GM12878 (cell line): ENCODE measurements at regions of chr6 and their contacts with region 1.

Region 1: DNA sequence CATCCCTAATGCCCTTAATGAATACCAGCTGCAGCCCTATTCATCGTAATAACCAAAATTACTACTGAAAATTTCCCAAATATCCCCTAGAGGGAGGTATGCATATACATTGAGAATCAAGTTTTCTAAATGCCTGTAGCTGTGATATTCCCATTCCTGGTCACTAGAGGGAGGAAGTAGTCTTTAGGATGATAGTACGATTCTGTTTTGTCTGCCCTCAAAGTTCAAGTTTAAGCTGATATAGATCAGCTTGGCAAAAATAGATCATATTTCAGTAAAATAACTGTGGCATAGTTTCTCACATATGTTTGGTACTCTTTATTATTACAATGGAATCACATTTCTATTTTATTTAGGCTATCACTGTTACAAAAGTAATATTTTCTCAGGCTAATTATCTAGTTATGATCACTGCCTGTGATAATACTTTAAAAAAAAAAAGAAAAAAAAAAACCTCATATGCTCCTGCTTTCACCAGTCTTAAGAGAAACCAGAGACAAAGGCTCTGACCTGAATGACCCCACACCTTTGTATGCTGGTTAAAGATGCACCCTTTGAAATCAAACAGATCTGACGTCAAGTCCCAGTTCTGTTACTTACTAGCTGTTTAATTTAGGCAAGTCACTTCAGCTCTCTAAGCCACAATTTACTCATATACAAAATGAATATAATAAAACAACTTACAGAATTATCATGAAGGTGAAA is 11.0 kb downstream of the TSPYL1 start:
- DNase-seq: no peak
- ATAC-seq: peak; percentile 86
- H3K4me3 ChIP-seq: no peak overlapping the region
- H3K27ac ChIP-seq: no peak overlapping the region
- H3K4me1 ChIP-seq: no peaks in the 10 kb centered on the region
- H3K27me3 ChIP-seq: no peaks in the 10 kb centered on the region
- CTCF ChIP-seq: peak; percentile 70 to 97 (median 74); a peak in 5 of 6 replicates
- EP300 ChIP-seq: no peak
- POLR2A ChIP-seq: no peak
- RAD21 ChIP-seq: peak; percentile 83

Region 2: GRCh38 chr6:116253505-116254296 is 15.0 kb before region 1 on chr6 and contains the start of gene TSPYL4:
- CTCF ChIA-PET with region 1: interaction called, 37 read pairs
- POLR2A ChIA-PET with region 1: interaction called, 12 read pairs
- RAD21 ChIA-PET with region 1: interaction called, 11 read pairs
- SMC1A ChIA-PET with region 1: interaction called, 16 read pairs
- in situ Hi-C with region 1: no loop called
- intact Hi-C with region 1: no loop called
- DNase-seq: peak; percentile 87
- ATAC-seq: peak; percentile 96
- H3K4me3 ChIP-seq: peak within 1 kb of the TSS; percentile 94
- H3K27ac ChIP-seq: peak within 1 kb of the TSS; percentile 90
- H3K4me1 ChIP-seq: peaks cover 13% of the 10 kb centered on the region
- H3K27me3 ChIP-seq: no peaks in the 10 kb centered on the region
- CTCF ChIP-seq: no peak
- EP300 ChIP-seq: no peak
- POLR2A ChIP-seq: peak; percentile 84
- RAD21 ChIP-seq: no peak
- polyA plus RNA-seq, gene TSPYL4: 1.5 to 2.2 TPM

Region 3: DNA sequence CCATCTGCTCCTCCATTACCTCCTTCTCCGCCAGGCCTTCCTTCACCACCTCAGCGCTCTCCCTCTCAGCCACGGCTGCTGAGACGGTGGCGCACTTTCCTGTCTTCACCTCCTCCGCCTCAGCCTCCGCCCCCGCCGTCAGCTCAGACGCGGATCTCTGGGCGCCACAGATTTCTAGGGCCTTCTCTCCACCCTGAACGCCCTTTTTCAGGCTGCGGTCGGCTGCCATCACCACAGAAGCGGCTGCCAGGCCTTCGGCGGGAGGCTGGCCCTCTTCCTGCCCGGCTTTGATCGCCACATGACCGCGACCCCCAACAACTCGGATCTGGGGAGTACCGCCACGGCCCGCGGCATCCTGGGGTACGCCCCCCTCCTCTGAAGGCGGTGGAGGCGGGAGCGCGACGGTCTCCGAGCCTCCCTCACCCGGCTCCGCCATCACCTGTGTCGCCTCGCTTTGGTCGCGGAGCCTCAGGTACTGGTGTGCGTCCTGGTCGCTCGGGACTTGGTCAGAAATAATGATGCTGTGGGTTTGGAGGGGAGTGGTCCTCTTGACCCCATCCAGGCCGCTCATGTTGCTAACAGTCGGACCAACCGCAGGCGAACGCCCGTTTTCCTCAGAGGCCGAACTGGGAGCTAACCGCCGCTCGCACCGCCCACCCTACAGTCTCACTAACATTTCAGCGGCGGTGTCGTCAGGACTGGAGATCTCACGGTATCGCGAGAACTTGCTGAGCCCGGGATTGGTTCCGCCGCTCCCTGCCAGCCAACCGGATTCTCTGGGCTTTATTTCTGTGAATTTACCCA is 10.7 kb after region 1 on chr6 and contains the start of gene TSPYL1:
- CTCF ChIA-PET with region 1: interaction called, 76 read pairs
- POLR2A ChIA-PET with region 1: interaction called, 8 read pairs
- RAD21 ChIA-PET with region 1: interaction called, 17 read pairs
- SMC1A ChIA-PET with region 1: interaction called, 23 read pairs
- in situ Hi-C with region 1: no loop called
- intact Hi-C with region 1: no loop called
- DNase-seq: peak; percentile 90
- ATAC-seq: peak; percentile 94
- H3K4me3 ChIP-seq: peak within 1 kb of the TSS; percentile 86
- H3K27ac ChIP-seq: peak within 1 kb of the TSS; percentile 96
- H3K4me1 ChIP-seq: no peaks in the 10 kb centered on the region
- H3K27me3 ChIP-seq: no peaks in the 10 kb centered on the region
- CTCF ChIP-seq: peak in 2 of 3 experiments; percentile 16 to 18; a peak in 1 of 6 replicates
- EP300 ChIP-seq: 0 out of 4 replicates have a peak, but pooled peaks of 1 of the 2 experiments have one; percentile 33
- POLR2A ChIP-seq: peak; percentile 94
- RAD21 ChIP-seq: no peak
- polyA plus RNA-seq, gene TSPYL1: 22.9 to 29.9 TPM

Region 4: DNA sequence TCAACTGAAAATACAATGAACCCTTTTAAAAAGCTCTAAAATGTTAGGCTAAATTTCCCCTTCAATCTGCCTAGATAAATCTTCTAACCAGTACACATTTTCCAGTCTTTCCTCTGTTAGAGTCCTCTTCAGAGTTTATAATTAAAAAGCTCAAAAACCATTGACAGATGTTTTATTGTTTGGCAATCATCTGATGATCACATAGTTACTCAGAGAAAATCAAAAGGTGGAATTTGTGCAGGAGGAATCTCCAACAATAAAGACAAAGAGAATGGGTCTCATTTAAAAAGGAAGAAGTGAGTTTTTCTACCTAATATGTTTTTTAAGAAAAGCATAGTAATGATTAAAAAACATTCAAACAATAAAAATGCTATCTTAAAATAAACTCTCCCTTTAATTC is 273.7 kb after region 1 on chr6:
- CTCF ChIA-PET with region 1: interaction called, 11 read pairs
- POLR2A ChIA-PET with region 1: interaction called, 4 read pairs
- RAD21 ChIA-PET with region 1: interaction called, 4 read pairs
- SMC1A ChIA-PET with region 1: interaction called, 3 read pairs
- in situ Hi-C with region 1: no loop called
- intact Hi-C with region 1: no loop called
- DNase-seq: no peak
- ATAC-seq: no peak
- H3K4me3 ChIP-seq: no peak overlapping the region
- H3K27ac ChIP-seq: no peak overlapping the region
- H3K4me1 ChIP-seq: no peaks in the 10 kb centered on the region
- H3K27me3 ChIP-seq: peaks cover 0 to 8% of the 10 kb centered on the region in 2 experiments; a peak in 1 of 4 replicates
- CTCF ChIP-seq: no peak
- EP300 ChIP-seq: no peak
- POLR2A ChIP-seq: no peak
- RAD21 ChIP-seq: no peak

Region 5: GRCh38 chr6:116561377-116562018 is 292.8 kb after region 1 on chr6:
- CTCF ChIA-PET with region 1: interaction called, 30 read pairs
- POLR2A ChIA-PET with region 1: interaction called, 9 read pairs
- RAD21 ChIA-PET with region 1: interaction called, 28 read pairs
- SMC1A ChIA-PET with region 1: interaction called, 19 read pairs
- in situ Hi-C with region 1: no loop called
- intact Hi-C with region 1: loop called (anchors 1 kb)
- DNase-seq: no peak
- ATAC-seq: peak; percentile 87
- H3K4me3 ChIP-seq: no peak overlapping the region
- H3K27ac ChIP-seq: no peak overlapping the region
- H3K4me1 ChIP-seq: no peaks in the 10 kb centered on the region
- H3K27me3 ChIP-seq: no peaks in the 10 kb centered on the region; a peak in 1 of 4 replicates
- CTCF ChIP-seq: peak; percentile 84 to 93 (median 88)
- EP300 ChIP-seq: no peak
- POLR2A ChIP-seq: no peak
- RAD21 ChIP-seq: peak; percentile 81

Region 6: GRCh38 chr6:116570856-116571682 is 302.3 kb after region 1 on chr6 and contains the start of gene RWDD1:
- CTCF ChIA-PET with region 1: interaction called, 17 read pairs
- POLR2A ChIA-PET with region 1: interaction called, 5 read pairs
- RAD21 ChIA-PET with region 1: interaction called, 3 read pairs
- SMC1A ChIA-PET with region 1: interaction called, 18 read pairs
- in situ Hi-C with region 1: no loop called
- intact Hi-C with region 1: no loop called
- DNase-seq: peak; percentile 95
- ATAC-seq: peak; percentile 94
- H3K4me3 ChIP-seq: peak within 1 kb of the TSS; percentile 88
- H3K27ac ChIP-seq: peak within 1 kb of the TSS; percentile 81
- H3K4me1 ChIP-seq: peaks cover 5% of the 10 kb centered on the region; the same call in 1 of the 2 replicates
- H3K27me3 ChIP-seq: no peaks in the 10 kb centered on the region
- CTCF ChIP-seq: peak in 1 of 3 experiments; percentile 2; a peak in 1 of 6 replicates
- EP300 ChIP-seq: no peak
- POLR2A ChIP-seq: peak; percentile 93
- RAD21 ChIP-seq: no peak
- polyA plus RNA-seq, gene RWDD1: 57.2 to 87.9 TPM